Right ventricle myocardium inferior (tissue), 1 donor: ENCODE measurements at regions of chr19 and their contacts with region 1.

Region 1: DNA sequence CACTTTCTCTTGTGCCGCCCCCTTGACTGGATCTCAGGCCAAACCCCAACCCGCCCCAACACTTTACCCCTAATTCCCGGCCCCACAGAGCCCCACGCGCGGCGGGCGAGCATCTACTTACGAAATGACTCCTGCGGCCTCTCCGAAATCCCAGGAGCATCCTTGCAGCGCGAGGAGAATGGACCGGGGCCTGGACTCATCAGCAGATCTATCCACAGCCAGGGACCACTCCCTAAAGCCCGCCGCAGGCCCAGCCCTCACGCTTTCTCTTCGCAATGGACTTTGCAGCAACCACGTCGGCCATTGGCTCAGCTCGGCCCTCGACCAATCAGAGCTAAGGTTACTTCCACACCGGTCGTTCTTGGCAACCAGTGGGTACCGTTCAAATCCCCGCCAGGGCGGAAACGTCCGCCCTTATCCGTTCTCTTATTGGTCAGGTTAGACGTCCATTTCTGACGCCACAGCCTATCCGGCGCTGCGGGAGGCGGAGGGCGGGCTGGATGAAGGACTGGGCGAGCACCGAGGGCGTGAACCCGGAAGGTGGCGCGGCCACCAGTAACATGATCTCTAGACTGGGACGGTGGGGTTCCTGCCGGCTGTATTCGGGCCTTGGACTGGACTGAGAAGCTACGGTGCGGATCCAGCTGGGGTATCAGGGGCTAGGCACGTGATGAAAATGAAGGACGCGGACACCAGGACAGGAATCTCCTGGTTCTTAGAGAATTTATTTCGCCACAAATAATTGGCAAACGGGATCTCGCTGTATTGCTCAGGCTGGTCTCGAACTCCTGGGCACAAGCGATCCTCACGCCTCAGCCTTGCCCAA is at the starts of genes CEP89 and FAAP24:
- DNase-seq: peak; percentile 97
- ATAC-seq: peak; percentile 99
- total RNA-seq, gene CEP89: 7.8 TPM
- total RNA-seq, gene FAAP24: 0.46 TPM

Region 2: DNA sequence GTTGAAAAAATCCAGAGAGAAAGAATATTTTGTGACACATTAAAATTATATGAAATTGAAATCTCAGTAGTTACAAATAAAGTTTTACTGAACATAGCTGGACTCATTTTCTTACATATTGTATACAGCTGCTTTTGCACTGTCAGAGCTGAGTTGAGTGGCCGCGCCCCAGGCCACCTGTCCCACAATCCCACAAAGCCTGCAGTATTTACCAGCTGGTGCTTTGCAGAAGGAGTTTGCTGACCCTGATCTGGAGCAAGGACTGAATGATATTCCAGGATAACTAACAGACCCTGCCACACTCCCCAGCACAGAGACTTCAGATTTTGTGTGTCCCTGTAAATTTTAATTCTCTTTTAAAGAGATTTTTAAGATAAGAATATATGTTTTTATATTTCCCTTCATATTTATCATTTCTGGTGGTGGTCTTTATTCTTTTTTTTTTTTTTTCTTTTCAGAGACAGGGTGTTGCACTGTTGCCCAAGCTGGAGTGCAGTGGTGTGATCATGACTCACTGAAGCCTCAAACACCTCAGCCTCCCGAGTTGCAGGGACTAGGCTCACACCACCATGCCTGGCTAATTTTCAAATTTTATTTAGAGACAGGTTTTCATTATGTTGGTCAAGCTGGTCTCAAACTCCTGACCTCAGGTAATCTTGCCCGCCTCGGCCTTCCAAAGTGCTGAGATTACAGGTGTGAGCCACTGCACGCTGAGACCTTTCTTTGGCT is 203.8 kb before region 1 on chr19:
- intact Hi-C with region 1: no loop called
- DNase-seq: no peak
- ATAC-seq: no peak

Region 3: GRCh38 chr19:33080761-33081681 is 109.1 kb after region 1 on chr19 and contains the start of gene GPATCH1:
- intact Hi-C with region 1: loop called (anchors 5 kb)
- DNase-seq: peak; percentile 96
- ATAC-seq: peak; percentile 96
- total RNA-seq, gene GPATCH1: 6.5 TPM

Region 4: GRCh38 chr19:33118643-33119042 is 146.7 kb after region 1 on chr19:
- intact Hi-C with region 1: loop called (anchors 2 kb)
- DNase-seq: no peak
- ATAC-seq: no peak

Region 5: GRCh38 chr19:33176670-33177416 is 204.9 kb after region 1 on chr19:
- intact Hi-C with region 1: loop called (anchors 5 kb)
- DNase-seq: peak; percentile 99
- ATAC-seq: peak; percentile 95